GM12878 (cell line): ENCODE measurements at regions of chr6 and their contacts with region 1.

Region 1: DNA sequence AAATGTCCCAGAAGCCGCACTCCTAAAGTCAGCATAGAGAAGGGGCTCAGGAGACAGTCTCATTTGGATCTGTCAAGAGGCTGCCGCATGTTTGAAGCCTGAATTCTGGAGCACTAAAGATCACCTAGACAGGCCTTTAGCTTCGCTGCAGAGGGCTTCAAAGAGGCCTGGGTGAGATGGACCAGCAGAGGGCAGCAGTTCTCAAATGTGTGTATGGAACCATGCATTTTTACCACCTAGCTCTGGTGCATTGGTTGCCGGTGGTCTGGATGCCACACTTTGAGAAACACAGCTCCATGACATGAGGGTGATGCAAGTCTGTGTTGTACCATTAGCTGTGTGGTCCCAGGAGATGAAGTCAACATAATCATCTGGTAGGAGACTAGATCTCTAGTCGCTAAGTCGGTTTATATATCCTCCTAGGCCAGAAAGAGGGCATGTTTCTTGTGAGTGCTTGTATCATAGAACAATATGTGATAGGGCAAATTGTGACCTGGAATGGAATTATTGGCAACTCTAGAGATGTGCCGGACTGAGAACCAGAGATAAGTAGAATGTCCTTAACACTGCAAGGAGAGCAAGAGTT is 64.8 kb downstream of the KIAA0319 start:
- DNase-seq: no peak
- ATAC-seq: peak; percentile 97
- H3K4me3 ChIP-seq: no peak overlapping the region
- H3K27ac ChIP-seq: no peak overlapping the region
- H3K4me1 ChIP-seq: no peaks in the 10 kb centered on the region
- H3K27me3 ChIP-seq: no peaks in the 10 kb centered on the region
- CTCF ChIP-seq: peak; percentile 79 to 89 (median 86)
- EP300 ChIP-seq: no peak
- POLR2A ChIP-seq: no peak
- RAD21 ChIP-seq: peak; percentile 73

Region 2: GRCh38 chr6:24004103-24005064 is 576.8 kb before region 1 on chr6:
- CTCF ChIA-PET with region 1: no interaction called
- POLR2A ChIA-PET with region 1: no interaction called
- RAD21 ChIA-PET with region 1: no interaction called
- SMC1A ChIA-PET with region 1: no interaction called
- in situ Hi-C with region 1: no loop called
- intact Hi-C with region 1: no loop called
- DNase-seq: no peak
- ATAC-seq: no peak
- H3K4me3 ChIP-seq: no peak overlapping the region
- H3K27ac ChIP-seq: no peak overlapping the region
- H3K4me1 ChIP-seq: no peaks in the 10 kb centered on the region
- H3K27me3 ChIP-seq: no peaks in the 10 kb centered on the region
- CTCF ChIP-seq: no peak
- EP300 ChIP-seq: no peak
- POLR2A ChIP-seq: no peak
- RAD21 ChIP-seq: peak; percentile 15; the same call in 1 of the 2 replicates

Region 3: GRCh38 chr6:24431045-24431451 is 150.1 kb before region 1 on chr6:
- CTCF ChIA-PET with region 1: interaction called, 3 read pairs
- POLR2A ChIA-PET with region 1: no interaction called
- RAD21 ChIA-PET with region 1: no interaction called
- SMC1A ChIA-PET with region 1: interaction called, 3 read pairs
- in situ Hi-C with region 1: no loop called
- intact Hi-C with region 1: loop called (anchors 5 kb)
- DNase-seq: no peak
- ATAC-seq: peak; percentile 54; the same call in 1 of the 3 replicates
- H3K4me3 ChIP-seq: no peak overlapping the region
- H3K27ac ChIP-seq: no peak overlapping the region
- H3K4me1 ChIP-seq: no peaks in the 10 kb centered on the region
- H3K27me3 ChIP-seq: no peaks in the 10 kb centered on the region
- CTCF ChIP-seq: peak; percentile 41 to 59 (median 44); a peak in 5 of 6 replicates
- EP300 ChIP-seq: no peak
- POLR2A ChIP-seq: no peak
- RAD21 ChIP-seq: peak; percentile 58

Region 4: GRCh38 chr6:24547243-24547642 is 33.9 kb before region 1 on chr6:
- CTCF ChIA-PET with region 1: interaction called, 6 read pairs
- POLR2A ChIA-PET with region 1: no interaction called
- RAD21 ChIA-PET with region 1: interaction called, 4 read pairs
- SMC1A ChIA-PET with region 1: interaction called, 13 read pairs
- in situ Hi-C with region 1: no loop called
- intact Hi-C with region 1: no loop called
- DNase-seq: no peak
- ATAC-seq: peak; percentile 64
- H3K4me3 ChIP-seq: no peak overlapping the region
- H3K27ac ChIP-seq: no peak overlapping the region
- H3K4me1 ChIP-seq: no peaks in the 10 kb centered on the region
- H3K27me3 ChIP-seq: no peaks in the 10 kb centered on the region
- CTCF ChIP-seq: peak in 1 of 3 experiments; percentile 41; a peak in 1 of 6 replicates
- EP300 ChIP-seq: no peak
- POLR2A ChIP-seq: no peak
- RAD21 ChIP-seq: peak; percentile 58

Region 5: GRCh38 chr6:24606199-24606930 is 25.2 kb after region 1 on chr6:
- CTCF ChIA-PET with region 1: interaction called, 10 read pairs
- POLR2A ChIA-PET with region 1: no interaction called
- RAD21 ChIA-PET with region 1: no interaction called
- SMC1A ChIA-PET with region 1: no interaction called
- in situ Hi-C with region 1: no loop called
- intact Hi-C with region 1: no loop called
- DNase-seq: no peak
- ATAC-seq: no peak
- H3K4me3 ChIP-seq: no peak overlapping the region
- H3K27ac ChIP-seq: no peak overlapping the region
- H3K4me1 ChIP-seq: no peaks in the 10 kb centered on the region
- H3K27me3 ChIP-seq: no peaks in the 10 kb centered on the region; a peak in 1 of 4 replicates
- CTCF ChIP-seq: no peak
- EP300 ChIP-seq: no peak
- POLR2A ChIP-seq: no peak
- RAD21 ChIP-seq: no peak

Region 6: DNA sequence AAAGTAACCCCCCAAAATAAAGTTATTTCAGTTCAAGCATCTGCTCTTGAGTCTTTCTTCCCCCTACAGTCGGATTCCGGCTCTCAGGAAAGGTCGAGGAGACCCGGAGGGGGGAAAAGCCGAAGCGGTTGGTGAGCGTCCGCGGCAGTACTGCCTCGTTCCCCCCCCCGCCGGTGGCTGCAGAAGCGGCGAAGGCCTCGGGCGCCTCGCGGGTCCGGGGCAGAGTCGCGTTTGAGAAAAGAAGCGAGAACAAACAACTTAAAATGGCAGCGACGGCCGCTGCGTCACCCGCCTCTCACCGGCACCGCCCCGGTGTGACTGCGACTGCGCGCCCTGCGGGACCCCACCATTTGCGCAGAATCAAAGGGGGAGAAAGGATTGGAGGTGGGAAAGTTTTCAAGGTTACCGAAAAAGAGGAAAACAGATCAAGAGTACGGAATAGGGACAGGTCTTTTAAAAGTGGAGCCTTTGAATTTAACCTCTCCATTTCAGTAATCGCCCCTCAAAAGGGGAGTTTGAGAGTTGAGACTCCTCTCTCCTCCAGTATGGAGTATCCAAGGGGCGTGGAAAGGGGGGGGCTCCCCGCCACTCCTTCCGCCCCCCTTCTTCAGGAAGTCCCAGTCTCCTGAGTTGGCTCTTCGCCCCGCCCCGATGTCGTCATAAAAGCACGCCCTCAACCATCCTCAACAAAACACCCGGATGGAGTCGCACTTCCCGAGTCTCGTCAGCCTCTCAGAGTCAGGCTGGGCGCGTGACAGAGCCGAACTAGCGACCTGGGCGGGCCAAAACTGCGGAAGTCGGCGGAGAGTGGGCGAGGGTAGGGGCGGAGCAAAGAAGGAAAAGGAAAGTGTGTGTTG is 139.7 kb after region 1 on chr6:
- CTCF ChIA-PET with region 1: interaction called, 12 read pairs
- POLR2A ChIA-PET with region 1: interaction called, 4 read pairs
- RAD21 ChIA-PET with region 1: interaction called, 4 read pairs
- SMC1A ChIA-PET with region 1: interaction called, 7 read pairs
- in situ Hi-C with region 1: no loop called
- intact Hi-C with region 1: no loop called
- DNase-seq: peak; percentile 98
- ATAC-seq: peak; percentile 89
- H3K4me3 ChIP-seq: peak overlapping the region; percentile 86
- H3K27ac ChIP-seq: peak overlapping the region; percentile 95
- H3K4me1 ChIP-seq: no peaks in the 10 kb centered on the region; the same call in 1 of the 2 replicates
- H3K27me3 ChIP-seq: no peaks in the 10 kb centered on the region
- CTCF ChIP-seq: no peak
- EP300 ChIP-seq: no peak
- POLR2A ChIP-seq: peak; percentile 73
- RAD21 ChIP-seq: no peak

Region 7: DNA sequence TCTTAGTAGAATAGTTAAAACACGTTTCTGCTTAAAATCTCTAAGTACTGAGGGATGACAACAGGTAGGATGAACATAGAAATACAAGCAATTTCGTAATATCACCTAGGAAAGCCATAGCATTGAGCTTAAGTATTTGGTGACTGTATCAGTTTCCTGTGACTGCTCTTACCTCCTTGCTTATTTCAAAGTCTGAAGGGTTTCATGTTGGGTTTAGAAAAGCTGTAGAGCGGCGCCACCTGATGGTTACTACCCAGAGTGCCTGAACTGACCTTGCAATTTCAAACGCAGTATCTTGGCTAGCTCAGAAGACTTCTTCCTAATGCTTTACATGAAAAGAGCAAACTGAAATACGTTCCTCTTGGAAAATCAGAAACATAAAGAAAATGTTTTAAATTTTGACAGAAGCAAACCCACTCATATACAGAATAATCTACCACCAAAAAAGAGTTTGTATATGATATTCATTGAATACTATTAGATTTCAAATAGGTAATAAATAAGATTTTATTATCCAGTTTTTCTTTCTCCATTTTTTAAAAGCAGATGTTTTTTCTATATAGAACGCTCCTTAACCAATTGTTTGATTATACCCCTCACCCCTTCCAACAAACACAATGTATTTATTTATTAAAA is 436.9 kb after region 1 on chr6:
- CTCF ChIA-PET with region 1: interaction called, 23 read pairs
- POLR2A ChIA-PET with region 1: no interaction called
- RAD21 ChIA-PET with region 1: interaction called, 5 read pairs
- SMC1A ChIA-PET with region 1: interaction called, 16 read pairs
- in situ Hi-C with region 1: loop called (anchors 10 kb)
- intact Hi-C with region 1: loop called (anchors 2 kb)
- DNase-seq: no peak
- ATAC-seq: peak; percentile 89
- H3K4me3 ChIP-seq: no peak overlapping the region
- H3K27ac ChIP-seq: no peak overlapping the region
- H3K4me1 ChIP-seq: peaks cover 5% of the 10 kb centered on the region
- H3K27me3 ChIP-seq: no peaks in the 10 kb centered on the region
- CTCF ChIP-seq: peak; percentile 76 to 90 (median 82)
- EP300 ChIP-seq: no peak
- POLR2A ChIP-seq: no peak
- RAD21 ChIP-seq: peak; percentile 99